ENCODE measurements at regions of chr12 and their contacts with region 1.

Region 1: DNA sequence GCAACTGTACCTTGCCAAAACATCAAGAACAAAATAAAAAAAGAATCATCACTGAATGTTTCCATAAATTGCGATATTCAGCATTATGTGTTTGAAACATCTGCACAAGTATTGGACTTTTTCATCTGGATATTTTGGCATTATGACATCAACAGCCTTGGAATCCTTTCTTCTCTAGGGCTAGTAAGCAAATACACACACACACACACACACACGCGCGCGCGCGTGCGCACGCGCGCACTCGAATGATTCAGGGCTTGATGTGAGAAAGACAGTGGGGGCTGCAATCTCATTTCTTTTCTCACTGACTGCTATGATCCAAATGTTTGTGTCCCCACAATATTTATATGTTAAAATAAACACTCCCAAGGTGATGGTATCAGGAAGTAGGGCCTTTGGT is 90.0 kb upstream of the SLC38A4 start:
- DNase-seq: peak in 1 of 2 donors; percentile 39
- H3K4me3 ChIP-seq: no peak overlapping the region
- H3K27ac ChIP-seq: no peak overlapping the region
- H3K4me1 ChIP-seq: peaks cover 0 to under 1% (median 0%) of the 10 kb centered on the region in 4 donors
- H3K27me3 ChIP-seq: no peaks in the 10 kb centered on the region
- CTCF ChIP-seq: no peak
- EP300 ChIP-seq: no peak
- POLR2A ChIP-seq: no peak

Region 2: DNA sequence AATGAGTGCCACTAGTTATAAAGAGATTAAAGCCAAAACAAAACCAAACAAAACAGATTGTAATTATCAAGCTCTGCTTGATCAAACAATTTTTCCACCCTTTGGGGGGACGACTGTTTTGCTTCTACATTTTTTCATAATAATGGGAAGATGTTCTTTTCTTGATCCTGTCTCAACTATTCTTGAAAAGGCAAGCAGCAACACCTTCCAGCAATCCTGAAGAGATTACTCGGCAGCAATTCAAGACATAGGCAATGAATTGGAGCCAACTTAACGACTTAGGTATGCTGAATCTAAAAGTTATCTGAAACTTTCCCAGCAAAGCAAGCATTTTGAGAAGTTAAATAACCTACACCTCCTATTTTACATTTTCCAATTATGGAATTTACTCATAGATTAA is 20.1 kb before region 1 on chr12:
- intact Hi-C with region 1: loop called (anchors 2 kb)
- DNase-seq: no peak
- H3K4me3 ChIP-seq: no peak overlapping the region
- H3K27ac ChIP-seq: no peak overlapping the region
- H3K4me1 ChIP-seq: no peaks in the 10 kb centered on the region
- H3K27me3 ChIP-seq: no peaks in the 10 kb centered on the region
- CTCF ChIP-seq: no peak
- EP300 ChIP-seq: no peak
- POLR2A ChIP-seq: no peak

Region 3: DNA sequence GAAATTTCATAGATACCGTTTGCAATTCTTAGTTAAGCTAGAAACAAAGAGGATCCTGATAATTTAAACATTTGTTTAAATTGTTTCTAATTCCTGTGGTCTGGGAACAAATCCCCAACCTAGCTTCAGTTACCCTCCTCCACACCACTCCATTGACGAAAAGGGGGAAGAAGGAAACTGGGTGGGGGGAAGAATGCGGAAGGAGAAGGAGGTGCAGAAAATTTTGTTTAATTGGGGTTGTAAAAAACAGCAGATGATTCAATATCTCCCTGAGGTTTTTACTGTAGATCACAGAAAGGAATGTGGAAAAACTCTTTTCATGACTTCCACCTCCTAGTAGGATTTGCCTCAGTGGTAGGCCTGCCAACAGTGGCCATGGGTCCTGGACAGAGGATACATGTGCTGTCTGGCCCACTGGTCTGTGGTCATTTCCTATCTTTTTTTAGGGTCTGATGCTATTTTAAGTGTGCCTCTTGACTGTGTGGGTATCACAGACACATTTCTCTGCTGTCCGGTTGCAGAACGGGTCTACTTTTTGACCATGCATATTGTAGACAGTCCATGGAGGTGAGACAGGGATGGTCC is 40.7 kb after region 1 on chr12:
- intact Hi-C with region 1: no loop called
- DNase-seq: no peak
- H3K4me3 ChIP-seq: no peak overlapping the region
- H3K27ac ChIP-seq: no peak overlapping the region
- H3K4me1 ChIP-seq: no peaks in the 10 kb centered on the region
- H3K27me3 ChIP-seq: no peaks in the 10 kb centered on the region
- CTCF ChIP-seq: no peak
- EP300 ChIP-seq: no peak
- POLR2A ChIP-seq: no peak

Region 4: DNA sequence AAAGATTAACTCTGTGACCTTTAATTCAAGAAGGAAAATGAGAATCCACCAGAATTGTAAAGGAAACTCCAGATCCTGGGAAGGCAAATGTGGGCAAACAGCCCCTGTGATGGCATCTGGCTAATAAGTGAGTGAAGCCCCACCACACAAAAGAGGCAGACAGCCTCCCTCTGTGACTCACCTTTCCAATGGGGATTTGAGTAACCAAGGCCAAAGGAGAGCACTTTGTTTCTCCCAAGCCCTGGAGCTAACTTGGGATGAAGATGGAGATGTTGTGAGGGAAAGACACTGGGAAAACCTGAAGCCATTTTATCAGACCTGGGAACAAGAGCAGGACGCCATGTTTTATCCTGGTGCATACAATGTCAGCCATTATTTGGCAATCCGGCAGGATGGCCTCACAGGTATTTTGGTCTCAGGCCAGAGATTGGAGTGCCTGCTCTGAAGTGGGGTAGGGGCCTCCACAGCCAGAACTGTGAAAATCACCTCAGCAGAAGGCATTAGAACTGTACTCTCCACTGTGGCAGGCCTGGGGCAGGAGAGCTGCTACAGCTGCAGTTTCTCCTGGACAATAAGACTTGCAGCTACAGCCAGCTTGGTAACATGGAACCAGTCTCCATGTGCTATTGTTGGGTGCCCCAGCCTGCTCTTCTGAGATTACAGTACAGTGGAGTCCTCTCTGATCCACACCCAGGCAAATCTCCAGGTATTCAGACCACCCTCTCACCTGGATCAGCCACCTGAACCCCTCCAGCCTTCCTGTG is 67.0 kb after region 1 on chr12:
- intact Hi-C with region 1: no loop called
- DNase-seq: no peak
- H3K4me3 ChIP-seq: no peak overlapping the region
- H3K27ac ChIP-seq: no peak overlapping the region
- H3K4me1 ChIP-seq: no peaks in the 10 kb centered on the region
- H3K27me3 ChIP-seq: no peaks in the 10 kb centered on the region
- CTCF ChIP-seq: no peak
- EP300 ChIP-seq: no peak
- POLR2A ChIP-seq: no peak

Region 5: DNA sequence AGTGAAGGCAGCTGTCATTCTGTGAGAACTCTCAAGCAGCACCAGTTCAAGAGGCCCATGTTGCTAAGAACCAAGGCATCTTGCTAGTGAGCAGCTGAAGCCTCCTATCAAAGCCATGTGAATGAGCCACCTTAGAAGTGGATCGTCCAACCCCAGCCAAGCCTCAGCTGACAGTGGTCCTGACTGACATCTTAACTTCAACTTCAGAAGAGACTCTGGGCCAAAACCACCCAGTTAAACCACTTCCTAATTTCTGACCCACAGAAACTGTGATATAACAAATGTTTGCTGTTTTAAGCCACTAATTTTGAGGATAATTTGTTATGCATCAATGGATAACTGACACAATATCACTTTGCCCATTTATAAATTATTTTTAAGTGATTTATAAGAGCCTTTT is 534.0 kb after region 1 on chr12:
- intact Hi-C with region 1: no loop called
- DNase-seq: no peak
- H3K4me3 ChIP-seq: no peak overlapping the region
- H3K27ac ChIP-seq: no peak overlapping the region
- H3K4me1 ChIP-seq: no peaks in the 10 kb centered on the region
- H3K27me3 ChIP-seq: no peaks in the 10 kb centered on the region
- CTCF ChIP-seq: no peak
- EP300 ChIP-seq: no peak
- POLR2A ChIP-seq: no peak

Measured in stomach (tissue), 19 donors.